H1 (cell line): ENCODE measurements at regions of chr3 and their contacts with region 1.

Region 1: GRCh38 chr3:118501152-118501551 is 533.5 kb downstream of the IGSF11 start:
- DNase-seq: peak in 1 of 2 experiments; percentile 52
- H3K4me3 ChIP-seq: peak overlapping the region in 1 of 4 experiments; percentile 8; a peak in 1 of 8 replicates
- H3K27ac ChIP-seq: no peak overlapping the region
- H3K4me1 ChIP-seq: peaks cover 2 to 9% (median 5%) of the 10 kb centered on the region in 4 experiments; a peak in 4 of 7 replicates
- H3K27me3 ChIP-seq: no peaks in the 10 kb centered on the region
- CTCF ChIP-seq: peak; percentile 27 to 56 (median 35); a peak in 3 of 4 replicates
- EP300 ChIP-seq: no peak
- POLR2A ChIP-seq: no peak
- RAD21 ChIP-seq: peak; percentile 31 to 46; a peak in 3 of 4 replicates

Region 2: GRCh38 chr3:118511402-118511801 is 10.2 kb after region 1 on chr3:
- CTCF ChIA-PET with region 1: interaction called, 15 read pairs
- POLR2A ChIA-PET with region 1: no interaction called
- DNase-seq: no peak
- H3K4me3 ChIP-seq: no peak overlapping the region
- H3K27ac ChIP-seq: no peak overlapping the region
- H3K4me1 ChIP-seq: no peaks in the 10 kb centered on the region
- H3K27me3 ChIP-seq: peaks cover 0 to 1% (median 0%) of the 10 kb centered on the region in 4 experiments; a peak in 1 of 7 replicates
- CTCF ChIP-seq: no peak
- EP300 ChIP-seq: no peak
- POLR2A ChIP-seq: no peak
- RAD21 ChIP-seq: no peak

Region 3: GRCh38 chr3:118526758-118527513 is 25.8 kb after region 1 on chr3:
- CTCF ChIA-PET with region 1: no interaction called
- POLR2A ChIA-PET with region 1: no interaction called
- DNase-seq: no peak
- H3K4me3 ChIP-seq: no peak overlapping the region
- H3K27ac ChIP-seq: no peak overlapping the region
- H3K4me1 ChIP-seq: no peaks in the 10 kb centered on the region
- H3K27me3 ChIP-seq: no peaks in the 10 kb centered on the region
- CTCF ChIP-seq: no peak
- EP300 ChIP-seq: no peak
- POLR2A ChIP-seq: no peak
- RAD21 ChIP-seq: no peak